Right lobe of liver (tissue), 6 donors: ENCODE measurements at regions of chr6 and their contacts with region 1.

Region 1: GRCh38 chr6:99746261-99746895 is 139.7 kb downstream of the PRDM13 start:
- DNase-seq: peak in 1 of 3 donors; percentile 51
- ATAC-seq: peak; percentile 91 to 96 (median 94)
- H3K4me3 ChIP-seq: no peak overlapping the region
- H3K27ac ChIP-seq: no peak overlapping the region
- H3K4me1 ChIP-seq: no peaks in the 10 kb centered on the region
- H3K27me3 ChIP-seq: peaks cover 0 to 4% of the 10 kb centered on the region in 2 donors
- CTCF ChIP-seq: peak; percentile 78 to 86 (median 82)
- POLR2A ChIP-seq: no peak

Region 2: GRCh38 chr6:99471638-99472037 is 274.7 kb before region 1 on chr6:
- intact Hi-C with region 1: loop called in 1 of 2 experiments (anchors 10 kb)
- DNase-seq: no peak
- ATAC-seq: no peak
- H3K4me3 ChIP-seq: no peak overlapping the region
- H3K27ac ChIP-seq: no peak overlapping the region
- H3K4me1 ChIP-seq: no peaks in the 10 kb centered on the region
- H3K27me3 ChIP-seq: no peaks in the 10 kb centered on the region
- CTCF ChIP-seq: no peak
- POLR2A ChIP-seq: no peak

Region 3: GRCh38 chr6:100088009-100088408 is 341.6 kb after region 1 on chr6:
- intact Hi-C with region 1: no loop called
- DNase-seq: no peak
- ATAC-seq: no peak
- H3K4me3 ChIP-seq: no peak overlapping the region
- H3K27ac ChIP-seq: no peak overlapping the region
- H3K4me1 ChIP-seq: no peaks in the 10 kb centered on the region
- H3K27me3 ChIP-seq: no peaks in the 10 kb centered on the region
- CTCF ChIP-seq: no peak
- POLR2A ChIP-seq: no peak